ENCODE measurements at regions of chr6 and their contacts with region 1.

Region 1: GRCh38 chr6:130885392-130886192 is 58.4 kb downstream of the SMLR1 start:
- DNase-seq: peak; percentile 67
- ATAC-seq: peak; percentile 92
- H3K4me3 ChIP-seq: no peak overlapping the region
- H3K27ac ChIP-seq: peak overlapping the region; percentile 29
- H3K4me1 ChIP-seq: peaks cover 5% of the 10 kb centered on the region
- H3K27me3 ChIP-seq: no peaks in the 10 kb centered on the region
- CTCF ChIP-seq: peak; percentile 82; the same call in 1 of the 2 replicates

Region 2: DNA sequence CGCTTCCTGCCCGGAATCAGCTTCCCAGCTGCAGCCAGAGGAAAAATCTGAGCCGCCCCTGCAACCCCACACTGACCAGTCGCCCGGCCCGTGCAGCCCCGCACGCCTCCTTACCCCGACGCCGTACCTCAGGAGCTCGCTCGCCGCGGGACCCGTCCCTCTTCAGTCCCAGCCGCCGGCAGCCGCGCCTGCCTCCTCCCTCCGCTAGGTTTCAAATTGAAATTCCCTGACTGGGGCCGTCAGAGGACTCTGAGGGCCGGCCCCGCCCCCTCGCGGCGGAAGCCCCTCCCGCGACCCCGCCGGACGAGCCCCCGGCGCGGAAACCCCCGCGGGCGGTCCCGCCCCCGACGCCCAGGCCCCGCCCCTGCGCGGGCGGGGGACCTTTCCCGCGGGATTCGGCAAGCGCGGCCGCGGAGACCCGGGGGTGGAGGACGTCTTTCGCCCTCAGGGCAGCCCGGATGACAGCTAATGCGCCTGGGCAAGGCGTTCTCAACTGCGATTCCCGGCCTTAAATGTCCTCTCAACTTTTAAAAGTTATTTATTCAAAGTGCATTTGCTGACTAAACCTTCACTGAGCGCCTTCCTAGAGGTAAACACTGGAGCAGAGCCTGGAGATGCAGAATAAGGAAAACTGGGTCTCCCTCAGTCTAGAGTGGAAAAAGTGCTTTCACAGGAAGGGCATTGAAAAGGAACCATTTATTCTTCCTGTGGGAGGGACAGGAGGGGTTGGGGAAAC is 177.6 kb after region 1 on chr6 and contains the start of gene EPB41L2:
- CTCF ChIA-PET with region 1: interaction called, 3 read pairs
- POLR2A ChIA-PET with region 1: no interaction called
- in situ Hi-C with region 1: no loop called
- intact Hi-C with region 1: loop called (anchors 5 kb)
- DNase-seq: no peak
- ATAC-seq: peak; percentile 92
- H3K4me3 ChIP-seq: peak within 1 kb of the TSS; percentile 83 to 89
- H3K27ac ChIP-seq: peak within 1 kb of the TSS; percentile 93
- H3K4me1 ChIP-seq: peaks cover 27% of the 10 kb centered on the region
- H3K27me3 ChIP-seq: no peaks in the 10 kb centered on the region
- CTCF ChIP-seq: 0 out of 2 replicates have a peak, but pooled peaks have one; percentile 4
- total RNA-seq, gene EPB41L2: 199 TPM

Region 3: DNA sequence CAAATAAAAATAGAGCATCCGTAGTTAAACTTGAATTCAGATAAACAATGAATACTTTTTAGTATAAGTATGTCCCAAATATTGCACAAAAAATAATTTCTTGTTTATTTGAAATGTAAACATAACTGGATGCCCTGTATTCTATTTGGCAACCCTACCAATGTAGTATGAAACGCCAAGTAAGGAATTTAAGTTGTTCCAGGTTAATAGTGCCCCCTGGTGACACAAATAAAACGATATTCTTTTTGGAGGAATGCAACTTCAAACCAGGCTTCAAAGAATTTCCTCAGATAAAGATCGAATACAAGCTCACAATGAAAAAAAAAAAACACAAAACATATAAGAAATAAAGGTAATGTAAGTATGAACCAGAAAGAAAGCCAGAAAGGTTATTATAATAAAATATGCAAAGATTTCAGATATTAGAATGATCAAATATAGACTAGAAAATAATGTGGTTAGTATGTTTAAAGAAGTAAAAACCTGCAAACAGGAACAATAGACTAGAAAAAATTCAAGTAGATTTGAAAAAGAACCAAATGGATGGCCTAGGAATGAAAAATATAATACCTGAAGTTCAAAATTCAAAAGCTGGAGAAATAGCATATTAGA is 231.3 kb after region 1 on chr6:
- CTCF ChIA-PET with region 1: interaction called, 5 read pairs
- POLR2A ChIA-PET with region 1: no interaction called
- in situ Hi-C with region 1: no loop called
- intact Hi-C with region 1: loop called (anchors 1 kb)
- DNase-seq: peak; percentile 28
- ATAC-seq: peak; percentile 74
- H3K4me3 ChIP-seq: no peak overlapping the region
- H3K27ac ChIP-seq: no peak overlapping the region
- H3K4me1 ChIP-seq: peaks cover 3% of the 10 kb centered on the region; the same call in 1 of the 2 replicates
- H3K27me3 ChIP-seq: no peaks in the 10 kb centered on the region
- CTCF ChIP-seq: peak; percentile 57; the same call in 1 of the 2 replicates

Region 4: GRCh38 chr6:131167773-131168172 is 282.2 kb after region 1 on chr6:
- CTCF ChIA-PET with region 1: interaction called, 8 read pairs
- POLR2A ChIA-PET with region 1: no interaction called
- in situ Hi-C with region 1: no loop called
- intact Hi-C with region 1: loop called (anchors 2 kb)
- DNase-seq: no peak
- ATAC-seq: peak; percentile 66
- H3K4me3 ChIP-seq: no peak overlapping the region
- H3K27ac ChIP-seq: no peak overlapping the region
- H3K4me1 ChIP-seq: no peaks in the 10 kb centered on the region
- H3K27me3 ChIP-seq: no peaks in the 10 kb centered on the region
- CTCF ChIP-seq: peak; percentile 39; the same call in 1 of the 2 replicates

Region 5: GRCh38 chr6:131532580-131533039 is 647.0 kb after region 1 on chr6:
- CTCF ChIA-PET with region 1: no interaction called
- POLR2A ChIA-PET with region 1: no interaction called
- in situ Hi-C with region 1: no loop called
- intact Hi-C with region 1: loop called (anchors 5 kb)
- DNase-seq: no peak
- ATAC-seq: no peak
- H3K4me3 ChIP-seq: no peak overlapping the region
- H3K27ac ChIP-seq: no peak overlapping the region
- H3K4me1 ChIP-seq: no peaks in the 10 kb centered on the region
- H3K27me3 ChIP-seq: no peaks in the 10 kb centered on the region
- CTCF ChIP-seq: no peak